Heart right ventricle (tissue), 16 donors: ENCODE measurements at regions of chr12 and their contacts with region 1.

Region 1: DNA sequence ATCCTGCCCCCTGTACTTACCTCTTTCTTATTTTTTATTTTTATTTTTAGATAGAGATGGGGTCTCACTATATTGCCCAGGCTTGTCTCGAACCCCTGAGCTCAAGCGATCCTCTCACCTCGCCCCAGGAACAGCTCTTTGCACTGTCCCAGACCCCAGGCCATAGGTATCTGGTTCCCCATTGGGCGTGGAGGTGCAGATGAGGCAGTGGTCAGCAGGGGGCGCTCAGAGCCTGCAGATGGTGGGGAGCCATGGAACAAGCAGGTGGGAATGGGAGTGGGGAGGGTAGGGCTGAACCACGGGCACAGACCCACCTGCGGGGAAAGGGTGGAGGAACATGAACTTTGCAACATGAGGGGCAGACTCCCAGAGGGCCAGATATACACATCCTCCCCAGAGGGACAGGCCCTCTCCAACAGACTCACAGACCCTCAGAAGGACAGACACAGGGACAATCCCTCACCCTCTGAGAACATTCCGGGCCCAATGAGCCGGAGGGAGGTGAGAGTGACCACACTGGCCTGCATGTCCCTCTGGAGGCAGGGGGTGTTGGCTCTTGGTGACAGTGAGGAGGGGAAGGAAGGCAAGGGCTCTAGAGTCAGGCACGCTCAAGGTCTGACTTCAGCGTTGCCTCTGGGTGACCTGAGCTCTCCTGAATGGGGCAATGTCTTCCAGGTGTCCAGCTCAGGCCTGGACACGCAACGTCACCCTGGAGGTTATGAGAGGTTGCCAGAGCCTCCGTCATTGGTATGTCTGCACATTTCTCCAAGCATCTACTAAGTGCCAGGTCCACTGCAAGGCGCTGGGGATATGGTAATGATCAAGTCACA is 34.9 kb downstream of the KRT80 start:
- DNase-seq: peak; percentile 77 to 82
- ATAC-seq: peak; percentile 61 to 87 (median 66)
- H3K4me3 ChIP-seq: no peak overlapping the region
- H3K27ac ChIP-seq: no peak overlapping the region
- H3K4me1 ChIP-seq: peaks cover 5 to 16% (median 9%) of the 10 kb centered on the region in 9 donors
- H3K27me3 ChIP-seq: peaks cover 0 to 8% (median 0%) of the 10 kb centered on the region in 7 donors
- CTCF ChIP-seq: peak; percentile 83 to 99 (median 96)

Region 2: GRCh38 chr12:52213512-52214420 is 56.8 kb after region 1 on chr12:
- intact Hi-C with region 1: loop called in 2 of 10 experiments (anchors 2 kb)
- DNase-seq: peak; percentile 58 to 81
- ATAC-seq: peak; percentile 77 to 94 (median 88)
- H3K4me3 ChIP-seq: no peak overlapping the region
- H3K27ac ChIP-seq: no peak overlapping the region
- H3K4me1 ChIP-seq: peaks cover 0 to 39% (median 16%) of the 10 kb centered on the region in 9 donors
- H3K27me3 ChIP-seq: peaks cover 0 to 10% (median 0%) of the 10 kb centered on the region in 7 donors
- CTCF ChIP-seq: peak; percentile 92 to 98 (median 96)

Region 3: GRCh38 chr12:52321418-52321817 is 164.5 kb after region 1 on chr12:
- intact Hi-C with region 1: loop called in 9 of 10 experiments (anchors 2 to 10 kb)
- DNase-seq: no peak
- ATAC-seq: no peak
- H3K4me3 ChIP-seq: no peak overlapping the region
- H3K27ac ChIP-seq: no peak overlapping the region
- H3K4me1 ChIP-seq: no peaks in the 10 kb centered on the region
- H3K27me3 ChIP-seq: peaks cover 14 to 68% (median 46%) of the 10 kb centered on the region in 7 donors
- CTCF ChIP-seq: no peak

Region 4: GRCh38 chr12:52372216-52373154 is 215.5 kb after region 1 on chr12:
- intact Hi-C with region 1: loop called in 2 of 10 experiments (anchors 5 to 10 kb)
- DNase-seq: peak; percentile 75 to 81
- ATAC-seq: peak; percentile 77 to 89 (median 84)
- H3K4me3 ChIP-seq: no peak overlapping the region
- H3K27ac ChIP-seq: peak overlapping the region in 1 of 10 donors; percentile 28
- H3K4me1 ChIP-seq: no peaks in the 10 kb centered on the region
- H3K27me3 ChIP-seq: peaks cover 0 to 28% (median 12%) of the 10 kb centered on the region in 7 donors
- CTCF ChIP-seq: peak; percentile 47 to 84 (median 75)

Region 5: GRCh38 chr12:52515927-52516831 is 359.2 kb after region 1 on chr12:
- intact Hi-C with region 1: loop called in 1 of 10 experiments (anchors 10 kb)
- DNase-seq: no peak
- ATAC-seq: no peak
- H3K4me3 ChIP-seq: no peak overlapping the region
- H3K27ac ChIP-seq: no peak overlapping the region
- H3K4me1 ChIP-seq: no peaks in the 10 kb centered on the region
- H3K27me3 ChIP-seq: peaks cover 0 to 56% (median 5%) of the 10 kb centered on the region in 7 donors
- CTCF ChIP-seq: no peak

Region 6: GRCh38 chr12:52870351-52871290 is 713.7 kb after region 1 on chr12:
- intact Hi-C with region 1: loop called in 7 of 10 experiments (anchors 5 kb)
- DNase-seq: peak; percentile 41 to 69
- ATAC-seq: peak in 7 of 8 donors; percentile 4 to 49 (median 41)
- H3K4me3 ChIP-seq: no peak overlapping the region
- H3K27ac ChIP-seq: peak overlapping the region in 6 of 10 donors; percentile 4 to 76 (median 10)
- H3K4me1 ChIP-seq: peaks cover 3 to 43% (median 21%) of the 10 kb centered on the region in 9 donors
- H3K27me3 ChIP-seq: no peaks in the 10 kb centered on the region
- CTCF ChIP-seq: peak; percentile 40 to 79 (median 66)

Region 7: GRCh38 chr12:52980693-52981423 is 823.9 kb after region 1 on chr12:
- intact Hi-C with region 1: loop called in 7 of 10 experiments (anchors 5 to 10 kb)
- DNase-seq: peak; percentile 82 to 92
- ATAC-seq: peak; percentile 89 to 97 (median 93)
- H3K4me3 ChIP-seq: no peak overlapping the region
- H3K27ac ChIP-seq: no peak overlapping the region
- H3K4me1 ChIP-seq: no peaks in the 10 kb centered on the region
- H3K27me3 ChIP-seq: peaks cover 0 to 32% (median 11%) of the 10 kb centered on the region in 7 donors
- CTCF ChIP-seq: peak; percentile 90 to 100 (median 97)